HEK293 (cell line): ENCODE measurements at regions of chr7 and their contacts with region 1.

Region 1: DNA sequence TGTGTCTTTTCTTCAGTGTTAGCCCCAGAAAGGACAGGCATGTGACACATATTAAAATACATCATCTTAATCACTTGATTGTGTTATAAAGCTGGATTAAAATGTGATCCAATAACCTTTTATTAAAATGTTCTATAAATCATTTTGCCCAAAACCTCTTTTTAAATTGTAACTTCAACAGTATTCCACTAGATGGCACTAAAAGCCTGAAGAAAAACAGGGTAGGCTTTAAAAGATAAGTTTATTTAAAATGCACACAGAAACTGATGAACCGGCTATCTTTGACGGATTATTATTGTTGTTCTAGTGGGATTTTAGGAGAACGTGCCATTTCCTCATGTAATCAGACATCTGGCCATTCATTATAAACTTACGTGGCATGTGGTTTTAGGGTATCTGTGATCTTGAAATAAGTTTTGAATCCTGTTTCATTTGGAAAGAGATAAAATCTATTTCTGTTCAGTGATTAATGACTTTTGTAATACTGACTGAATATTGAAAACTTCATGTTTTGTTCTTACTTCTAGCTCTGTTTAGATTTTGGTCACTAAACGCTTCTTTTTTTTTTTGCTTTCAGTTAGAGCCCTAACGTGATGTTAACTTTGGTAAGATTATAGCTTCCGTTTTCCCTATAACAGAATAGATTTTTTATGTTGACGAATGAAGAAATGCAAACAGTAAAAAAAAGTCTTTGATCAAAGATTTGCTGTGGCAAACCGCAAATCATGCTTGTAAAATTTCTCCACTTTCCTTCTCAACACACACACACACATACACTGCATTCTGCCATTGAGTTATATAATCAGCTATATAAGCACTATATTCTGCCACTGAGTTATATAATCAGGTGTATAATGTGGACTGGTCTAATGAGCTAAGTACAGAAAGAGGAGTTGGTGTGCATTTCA is 13.6 kb downstream of the VPS50 start:
- H3K4me3 ChIP-seq: no peak overlapping the region
- H3K27ac ChIP-seq: no peak overlapping the region
- H3K4me1 ChIP-seq: no peaks in the 10 kb centered on the region
- CTCF ChIP-seq: 0 out of 2 replicates have a peak, but pooled peaks have one; percentile 18

Region 2: DNA sequence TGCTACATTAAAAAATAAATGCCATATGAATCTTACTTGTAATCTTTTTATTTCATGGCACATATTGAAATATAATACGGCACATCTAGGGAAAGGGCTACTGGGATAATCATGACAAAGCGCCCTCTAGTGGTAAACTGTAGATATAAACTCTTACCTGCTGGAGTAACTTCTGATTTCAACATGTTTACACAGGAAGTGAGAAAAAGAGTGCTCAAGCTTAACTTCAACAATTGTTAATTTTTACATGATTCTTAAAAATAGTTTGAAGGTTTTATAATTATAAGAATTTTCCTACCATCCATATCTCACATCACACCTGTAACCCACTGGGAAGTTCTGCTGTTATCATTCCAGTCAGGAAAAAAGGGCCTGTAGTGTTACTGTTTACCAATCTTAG is 17.5 kb before region 1 on chr7:
- CTCF ChIA-PET with region 1: interaction called, 19 read pairs
- POLR2A ChIA-PET with region 1: interaction called, 5 read pairs
- H3K4me3 ChIP-seq: no peak overlapping the region
- H3K27ac ChIP-seq: no peak overlapping the region
- H3K4me1 ChIP-seq: no peaks in the 10 kb centered on the region
- CTCF ChIP-seq: 0 out of 2 replicates have a peak, but pooled peaks have one; percentile 14

Region 3: DNA sequence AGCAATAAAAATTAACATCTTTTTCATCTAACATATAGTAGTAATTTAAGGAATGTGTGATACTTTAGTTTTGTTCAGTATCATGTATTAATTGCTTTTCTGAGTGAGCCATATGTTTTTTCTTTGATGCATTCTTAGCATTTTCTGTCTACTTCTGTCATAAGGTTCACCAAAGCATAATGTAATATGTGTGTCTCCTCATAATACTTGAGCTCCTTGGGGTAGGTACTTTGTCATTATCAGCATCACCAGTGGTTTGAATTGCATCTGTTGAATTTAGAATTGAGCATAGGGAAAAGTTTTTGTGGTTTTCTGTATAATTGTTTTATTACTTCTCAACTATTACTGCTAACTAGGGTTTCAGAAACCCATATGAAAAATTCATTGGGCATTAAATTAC is 12.9 kb after region 1 on chr7:
- CTCF ChIA-PET with region 1: interaction called, 10 read pairs
- POLR2A ChIA-PET with region 1: no interaction called
- H3K4me3 ChIP-seq: no peak overlapping the region
- H3K27ac ChIP-seq: no peak overlapping the region
- H3K4me1 ChIP-seq: no peaks in the 10 kb centered on the region
- CTCF ChIP-seq: no peak

Region 4: GRCh38 chr7:93544691-93545090 is 298.9 kb after region 1 on chr7:
- CTCF ChIA-PET with region 1: interaction called, 22 read pairs
- POLR2A ChIA-PET with region 1: no interaction called
- H3K4me3 ChIP-seq: no peak overlapping the region
- H3K27ac ChIP-seq: no peak overlapping the region
- H3K4me1 ChIP-seq: no peaks in the 10 kb centered on the region
- CTCF ChIP-seq: no peak

Region 5: DNA sequence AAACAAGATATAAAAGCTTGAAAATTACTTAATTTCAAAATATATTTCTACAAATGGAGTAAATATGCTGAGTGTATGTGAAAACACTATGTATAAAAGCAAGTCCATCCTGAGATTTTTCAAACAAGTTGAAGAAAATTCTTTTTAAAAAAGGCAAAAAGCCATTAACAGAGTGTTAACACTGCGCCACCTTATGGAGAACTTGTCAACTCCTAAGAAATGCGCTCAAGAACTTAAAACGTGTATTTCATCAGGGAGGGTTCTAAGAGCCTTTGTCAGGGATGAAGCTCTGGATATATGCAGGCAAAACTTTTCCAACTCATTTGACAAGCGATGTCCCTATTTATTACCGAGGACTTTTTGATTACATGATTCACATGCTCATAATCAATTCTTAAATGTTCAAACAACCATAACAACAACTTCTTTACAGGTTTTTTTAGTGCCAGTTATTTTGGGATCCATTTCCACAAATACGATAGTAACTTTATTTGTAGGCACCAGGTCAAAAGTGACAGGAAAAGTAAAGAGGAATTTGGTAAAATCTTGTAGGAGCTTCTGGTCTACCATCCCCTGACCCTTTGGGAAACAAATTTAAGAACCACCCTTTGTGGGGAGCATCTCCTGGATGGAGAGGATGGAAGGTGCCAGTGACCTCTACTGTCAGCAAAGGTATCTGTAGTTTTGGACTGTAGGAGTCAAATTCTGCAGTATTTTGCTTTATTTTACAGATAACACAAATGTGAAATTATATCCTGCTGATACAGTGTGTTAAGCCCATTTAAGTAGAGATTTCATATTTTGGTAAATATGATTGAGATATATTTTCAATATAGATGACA is 305.5 kb after region 1 on chr7:
- CTCF ChIA-PET with region 1: interaction called, 53 read pairs
- POLR2A ChIA-PET with region 1: no interaction called
- H3K4me3 ChIP-seq: no peak overlapping the region
- H3K27ac ChIP-seq: no peak overlapping the region
- H3K4me1 ChIP-seq: no peaks in the 10 kb centered on the region
- CTCF ChIP-seq: no peak; the same call in 1 of the 2 replicates